CD4-positive, alpha-beta memory T cell (primary cell): ENCODE measurements at regions of chr17 and their contacts with region 1.

Region 1: DNA sequence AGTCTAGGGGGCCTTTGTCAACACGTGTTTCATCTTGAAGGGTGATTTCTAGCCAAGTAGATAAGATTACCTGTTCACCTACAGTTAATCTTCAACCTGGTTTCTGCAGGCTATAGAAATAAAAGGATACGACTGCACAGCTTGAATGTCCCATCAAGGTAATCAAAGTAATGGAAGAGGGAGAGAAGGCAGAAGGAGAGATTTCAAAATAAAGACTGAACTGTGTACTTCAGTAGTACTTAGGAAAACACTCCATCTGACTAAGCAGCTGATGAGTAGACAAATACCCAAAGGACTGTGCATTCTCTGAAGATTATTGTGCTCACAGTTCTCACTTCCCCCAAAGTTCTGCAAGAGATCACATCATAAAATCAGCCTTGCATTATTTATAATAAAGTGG is 5.8 kb upstream of the RFFL start:
- DNase-seq: no peak
- H3K4me3 ChIP-seq: no peak overlapping the region
- H3K4me3 Mint-ChIP-seq: no peak overlapping the region
- H3K27ac ChIP-seq: no peak overlapping the region
- H3K27ac Mint-ChIP-seq: peak overlapping the region in 4 of 7 donors; percentile 1 to 61 (median 9)
- H3K4me1 ChIP-seq: peaks cover 57% of the 10 kb centered on the region
- H3K4me1 Mint-ChIP-seq: peaks cover 38 to 78% (median 60%) of the 10 kb centered on the region in 4 donors
- H3K27me3 ChIP-seq: no peaks in the 10 kb centered on the region
- H3K27me3 Mint-ChIP-seq: no peaks in the 10 kb centered on the region

Region 2: DNA sequence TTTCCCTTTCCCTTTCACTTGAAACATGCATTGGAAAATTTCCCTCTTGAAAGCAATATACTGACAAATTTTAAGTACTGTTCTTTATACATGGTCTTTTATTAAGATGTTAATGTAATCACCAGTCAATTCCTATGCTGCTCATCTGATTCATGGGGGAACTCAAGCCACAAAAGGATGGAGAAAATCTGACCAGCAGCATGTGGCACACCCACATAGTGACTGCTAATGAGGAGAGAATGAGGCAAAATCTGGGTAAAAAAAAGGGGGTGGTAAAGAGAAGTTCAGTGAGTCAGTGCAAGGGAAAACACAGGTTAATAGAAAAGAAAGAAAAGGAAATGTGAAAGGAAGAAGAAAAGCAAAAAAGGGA is 17.1 kb before region 1 on chr17:
- CTCF ChIA-PET with region 1: interaction called, 46 read pairs
- POLR2A ChIA-PET with region 1: interaction called, 179 read pairs
- intact Hi-C with region 1: no loop called
- DNase-seq: no peak
- H3K4me3 ChIP-seq: peak overlapping the region in 1 of 2 donors; percentile 25
- H3K4me3 Mint-ChIP-seq: peak overlapping the region; percentile 4 to 86 (median 79)
- H3K27ac ChIP-seq: peak overlapping the region; percentile 60
- H3K27ac Mint-ChIP-seq: peak overlapping the region; percentile 80 to 99 (median 95)
- H3K4me1 ChIP-seq: peaks cover 94% of the 10 kb centered on the region
- H3K4me1 Mint-ChIP-seq: peaks cover 62 to 83% (median 67%) of the 10 kb centered on the region in 4 donors
- H3K27me3 ChIP-seq: no peaks in the 10 kb centered on the region
- H3K27me3 Mint-ChIP-seq: no peaks in the 10 kb centered on the region

Region 3: DNA sequence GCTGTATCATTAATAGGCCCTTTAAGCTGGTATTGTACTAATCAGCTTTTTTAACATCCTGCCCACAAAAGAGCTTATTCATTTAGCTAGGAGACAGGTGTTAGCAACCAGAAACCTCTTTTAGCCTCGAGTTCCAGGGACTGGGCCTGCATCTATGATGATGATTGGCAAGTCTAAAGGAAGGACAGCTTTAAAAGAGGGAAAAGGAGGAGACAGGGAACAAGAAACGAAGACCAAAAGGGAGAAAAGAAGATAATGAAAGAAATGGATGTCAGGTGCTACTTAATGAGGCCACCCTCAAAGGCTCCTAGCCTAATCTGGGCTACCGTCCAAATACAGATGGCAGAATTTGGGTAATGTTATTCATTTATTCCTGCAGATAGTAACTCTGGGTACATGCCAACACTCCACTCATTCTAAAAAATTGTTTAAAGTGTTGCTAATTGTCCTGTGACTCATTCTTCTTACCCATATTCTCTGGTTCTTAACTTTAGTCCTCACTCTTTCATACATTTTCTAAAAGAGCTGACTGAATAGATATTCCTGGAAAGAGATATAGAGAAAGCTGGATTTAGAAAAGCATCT is 12.9 kb after region 1 on chr17:
- CTCF ChIA-PET with region 1: interaction called, 34 read pairs
- POLR2A ChIA-PET with region 1: interaction called, 27 read pairs
- intact Hi-C with region 1: no loop called
- DNase-seq: peak in 2 of 5 donors; percentile 26 to 49
- H3K4me3 ChIP-seq: no peak overlapping the region
- H3K4me3 Mint-ChIP-seq: peak overlapping the region; percentile 58 to 83 (median 76)
- H3K27ac ChIP-seq: peak overlapping the region; percentile 52
- H3K27ac Mint-ChIP-seq: peak overlapping the region; percentile 71 to 98 (median 97)
- H3K4me1 ChIP-seq: peaks cover 82% of the 10 kb centered on the region
- H3K4me1 Mint-ChIP-seq: peaks cover 58 to 82% (median 74%) of the 10 kb centered on the region in 4 donors
- H3K27me3 ChIP-seq: no peaks in the 10 kb centered on the region
- H3K27me3 Mint-ChIP-seq: no peaks in the 10 kb centered on the region

Region 4: DNA sequence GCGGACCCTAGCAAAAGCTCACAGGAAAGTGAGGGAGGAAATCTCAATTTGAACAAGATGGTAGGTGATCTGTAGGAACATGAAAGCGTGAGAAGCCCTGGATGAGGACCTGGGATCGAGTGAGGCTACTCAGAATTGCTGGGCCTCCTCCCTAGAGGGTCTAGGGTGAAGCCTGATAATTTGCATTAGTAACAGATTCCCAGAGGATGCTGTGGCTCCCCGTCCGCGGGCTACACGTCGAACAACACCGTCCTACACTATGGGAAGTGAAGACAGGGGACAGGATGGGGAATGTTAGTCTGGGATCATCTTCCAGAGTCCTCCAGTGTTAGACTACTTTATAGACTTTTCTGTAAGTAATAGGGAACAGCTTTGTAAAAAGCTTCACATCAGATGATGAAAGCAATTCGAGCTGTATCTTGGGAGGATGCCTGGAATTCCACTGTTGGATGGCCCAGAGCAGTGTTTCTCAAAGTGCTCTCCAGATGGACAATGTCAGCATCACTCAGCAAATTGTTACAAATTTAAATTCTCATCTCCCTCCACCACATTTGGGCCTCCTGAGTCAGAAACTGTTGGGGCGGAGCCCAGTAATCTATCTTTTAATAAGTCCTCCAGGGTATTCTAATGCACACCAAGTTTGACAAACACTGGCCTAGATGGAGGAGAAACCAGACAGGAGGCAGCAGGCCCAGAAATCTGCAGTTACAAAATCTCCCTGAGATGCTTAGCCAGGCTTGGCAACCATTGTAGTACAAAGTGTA is 58.6 kb after region 1 on chr17:
- CTCF ChIA-PET with region 1: no interaction called
- POLR2A ChIA-PET with region 1: no interaction called
- intact Hi-C with region 1: no loop called
- DNase-seq: no peak
- H3K4me3 ChIP-seq: no peak overlapping the region
- H3K4me3 Mint-ChIP-seq: no peak overlapping the region
- H3K27ac ChIP-seq: no peak overlapping the region
- H3K27ac Mint-ChIP-seq: peak overlapping the region in 1 of 7 donors; percentile 53
- H3K4me1 ChIP-seq: no peaks in the 10 kb centered on the region
- H3K4me1 Mint-ChIP-seq: no peaks in the 10 kb centered on the region
- H3K27me3 ChIP-seq: no peaks in the 10 kb centered on the region
- H3K27me3 Mint-ChIP-seq: no peaks in the 10 kb centered on the region

Region 5: DNA sequence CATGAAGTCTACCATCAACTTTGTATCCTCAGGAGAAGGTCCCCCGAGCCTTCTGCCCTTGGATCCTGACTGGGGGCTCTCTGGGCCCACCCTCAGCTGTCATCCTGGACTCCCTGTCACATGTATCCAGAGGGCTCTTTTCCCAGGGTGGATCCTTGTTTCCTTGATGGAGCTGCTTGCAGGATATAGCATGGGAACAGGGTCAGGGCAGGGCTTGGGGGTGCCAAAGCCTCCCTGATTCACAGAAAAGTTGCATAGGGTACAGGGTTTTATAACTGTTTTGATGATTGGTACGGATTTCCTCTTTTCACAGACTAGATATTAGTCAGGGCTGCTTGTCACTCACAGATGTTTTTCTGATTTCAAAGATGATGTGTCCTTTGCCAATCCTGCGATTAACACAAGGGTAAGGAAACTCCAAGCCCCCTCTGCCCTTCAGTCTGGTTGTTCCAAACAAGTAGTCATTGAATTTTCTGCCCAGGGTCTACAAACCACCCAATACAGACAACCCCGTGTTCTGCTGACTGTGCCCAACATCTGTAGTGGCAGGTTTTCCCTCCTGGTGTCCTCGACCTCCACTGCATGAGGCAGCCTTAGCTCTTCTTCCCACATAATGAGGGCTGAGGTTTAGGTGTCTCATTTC is 145.4 kb after region 1 on chr17:
- CTCF ChIA-PET with region 1: no interaction called
- POLR2A ChIA-PET with region 1: no interaction called
- intact Hi-C with region 1: no loop called
- DNase-seq: peak in 3 of 5 donors; percentile 57 to 65 (median 58)
- H3K4me3 ChIP-seq: peak overlapping the region; percentile 38 to 51
- H3K4me3 Mint-ChIP-seq: peak overlapping the region; percentile 16 to 85 (median 79)
- H3K27ac ChIP-seq: peak overlapping the region; percentile 60
- H3K27ac Mint-ChIP-seq: peak overlapping the region; percentile 87 to 97 (median 94)
- H3K4me1 ChIP-seq: peaks cover 93% of the 10 kb centered on the region
- H3K4me1 Mint-ChIP-seq: peaks cover 70 to 91% (median 79%) of the 10 kb centered on the region in 4 donors
- H3K27me3 ChIP-seq: no peaks in the 10 kb centered on the region
- H3K27me3 Mint-ChIP-seq: no peaks in the 10 kb centered on the region